Activated B cell treated with CpG ODN at 0.5 μM for 24 hours (primary cell): ENCODE measurements at regions of chr5 and their contacts with region 1.

Region 1: DNA sequence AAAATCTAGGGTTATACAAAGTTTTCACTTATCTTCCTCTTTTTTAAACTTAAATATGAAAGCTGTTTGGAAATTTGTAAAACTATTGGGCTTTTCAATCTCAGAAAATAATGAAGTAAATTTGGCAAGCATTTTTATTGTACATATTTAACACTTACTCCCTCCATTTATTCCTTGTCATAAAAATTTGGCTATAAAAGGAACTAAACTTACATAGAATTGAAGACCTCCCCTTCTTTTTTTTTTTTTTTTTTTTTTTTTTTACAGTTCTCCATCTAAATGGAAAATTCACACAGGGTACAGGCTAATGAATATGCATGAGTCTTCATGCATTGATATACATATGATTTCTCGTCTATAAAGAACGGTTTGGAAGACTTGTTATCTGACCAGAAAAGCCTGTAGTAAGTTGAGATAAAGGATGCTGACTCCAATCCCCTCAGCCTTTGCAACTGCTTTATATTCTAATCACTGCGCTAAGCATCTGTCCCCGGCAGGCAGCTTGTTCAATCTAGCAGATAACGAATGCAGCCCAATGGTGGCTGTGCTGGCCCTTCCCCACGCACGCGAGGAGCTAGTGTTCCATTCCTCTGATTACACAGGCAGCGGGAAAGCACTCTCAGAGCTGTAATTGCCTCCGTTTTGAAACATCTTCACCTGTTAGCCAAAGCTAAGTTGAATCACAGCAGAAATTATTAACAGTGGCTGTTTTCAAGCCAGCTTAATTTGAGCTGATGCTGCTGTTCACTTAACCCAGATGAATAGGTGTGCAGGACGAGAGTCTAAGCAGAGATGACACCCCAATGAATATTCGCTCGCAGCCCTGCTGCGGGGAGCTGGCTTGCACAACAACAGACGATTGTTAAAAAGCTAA is 453.8 kb upstream of the ZNF608 start:
- DNase-seq: no peak
- ATAC-seq: peak; percentile 54
- H3K4me3 Mint-ChIP-seq: peak overlapping the region; percentile 80
- H3K27ac Mint-ChIP-seq: no peak overlapping the region
- H3K4me1 Mint-ChIP-seq: peaks cover 7% of the 10 kb centered on the region
- H3K27me3 Mint-ChIP-seq: no peaks in the 10 kb centered on the region
- CTCF ChIP-seq: no peak

Region 2: GRCh38 chr5:125117566-125117965 is 82.6 kb before region 1 on chr5:
- CTCF ChIA-PET with region 1: no interaction called
- POLR2A ChIA-PET with region 1: no interaction called
- intact Hi-C with region 1: loop called (anchors 2 kb)
- DNase-seq: no peak
- ATAC-seq: no peak
- H3K4me3 Mint-ChIP-seq: no peak overlapping the region
- H3K27ac Mint-ChIP-seq: no peak overlapping the region
- H3K4me1 Mint-ChIP-seq: peaks cover 6% of the 10 kb centered on the region
- H3K27me3 Mint-ChIP-seq: no peaks in the 10 kb centered on the region
- CTCF ChIP-seq: no peak

Region 3: DNA sequence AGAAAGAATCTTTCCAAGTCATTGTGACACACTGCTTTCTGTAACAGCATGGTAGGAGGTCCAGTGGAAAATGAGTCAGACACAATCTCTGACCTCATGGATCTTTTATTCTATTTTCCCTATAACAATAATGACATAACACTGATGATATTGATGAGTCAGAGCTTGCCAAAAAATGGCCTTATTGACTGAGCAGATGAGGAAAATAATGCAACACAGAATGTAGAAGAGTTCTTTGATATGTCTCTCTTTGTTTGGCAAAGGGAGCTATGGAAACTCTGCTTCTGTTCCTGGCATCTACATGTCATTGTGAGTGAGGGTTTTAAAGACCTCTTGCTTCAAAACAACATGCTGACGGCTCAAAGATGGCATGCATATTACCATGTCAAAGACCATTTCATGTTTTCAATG is 10.7 kb before region 1 on chr5:
- CTCF ChIA-PET with region 1: no interaction called
- POLR2A ChIA-PET with region 1: no interaction called
- intact Hi-C with region 1: no loop called
- DNase-seq: no peak
- ATAC-seq: no peak
- H3K4me3 Mint-ChIP-seq: no peak overlapping the region
- H3K27ac Mint-ChIP-seq: no peak overlapping the region
- H3K4me1 Mint-ChIP-seq: peaks cover 26% of the 10 kb centered on the region
- H3K27me3 Mint-ChIP-seq: no peaks in the 10 kb centered on the region
- CTCF ChIP-seq: no peak